Right ventricle myocardium superior (tissue), 1 donor: ENCODE measurements at regions of chr5 and their contacts with region 1.

Region 1: GRCh38 chr5:131281133-131281867 is 17.4 kb downstream of the CDC42SE2 start:
- DNase-seq: no peak
- ATAC-seq: no peak

Region 2: GRCh38 chr5:131406975-131407638 is 125.8 kb after region 1 on chr5:
- intact Hi-C with region 1: loop called (anchors 10 kb)
- DNase-seq: no peak
- ATAC-seq: no peak

Region 3: GRCh38 chr5:131417240-131417869 is 136.1 kb after region 1 on chr5:
- intact Hi-C with region 1: no loop called
- DNase-seq: peak; percentile 81
- ATAC-seq: peak; percentile 68